CD8-positive, alpha-beta memory T cell (primary cell): ENCODE measurements at regions of chr7 and their contacts with region 1.

Region 1: GRCh38 chr7:5494683-5495561 is 71.3 kb upstream of the TNRC18 start:
- DNase-seq: peak; percentile 67 to 83 (median 73)
- H3K4me3 ChIP-seq: peak overlapping the region; percentile 25
- H3K4me3 Mint-ChIP-seq: peak overlapping the region in 6 of 7 donors; percentile 3 to 73 (median 58)
- H3K27ac ChIP-seq: no peak overlapping the region
- H3K27ac Mint-ChIP-seq: peak overlapping the region in 5 of 8 donors; percentile 23 to 51 (median 24)
- H3K4me1 ChIP-seq: peaks cover 19% of the 10 kb centered on the region
- H3K4me1 Mint-ChIP-seq: peaks cover 8 to 24% (median 23%) of the 10 kb centered on the region in 3 donors
- H3K27me3 ChIP-seq: no peaks in the 10 kb centered on the region
- H3K27me3 Mint-ChIP-seq: no peaks in the 10 kb centered on the region

Region 2: GRCh38 chr7:5387711-5388245 is 107.1 kb before region 1 on chr7:
- CTCF ChIA-PET with region 1: no interaction called
- POLR2A ChIA-PET with region 1: no interaction called
- DNase-seq: no peak
- H3K4me3 ChIP-seq: no peak overlapping the region
- H3K4me3 Mint-ChIP-seq: no peak overlapping the region
- H3K27ac ChIP-seq: no peak overlapping the region
- H3K27ac Mint-ChIP-seq: no peak overlapping the region
- H3K4me1 ChIP-seq: peaks cover 9% of the 10 kb centered on the region
- H3K4me1 Mint-ChIP-seq: peaks cover 17 to 43% (median 26%) of the 10 kb centered on the region in 3 donors
- H3K27me3 ChIP-seq: no peaks in the 10 kb centered on the region
- H3K27me3 Mint-ChIP-seq: no peaks in the 10 kb centered on the region

Region 3: GRCh38 chr7:5510426-5511045 is 15.6 kb after region 1 on chr7:
- CTCF ChIA-PET with region 1: interaction called, 18 read pairs
- POLR2A ChIA-PET with region 1: no interaction called
- DNase-seq: no peak
- H3K4me3 ChIP-seq: no peak overlapping the region
- H3K4me3 Mint-ChIP-seq: peak overlapping the region in 2 of 7 donors; percentile 6 to 20
- H3K27ac ChIP-seq: no peak overlapping the region
- H3K27ac Mint-ChIP-seq: no peak overlapping the region
- H3K4me1 ChIP-seq: peaks cover 17% of the 10 kb centered on the region
- H3K4me1 Mint-ChIP-seq: peaks cover 15 to 22% (median 16%) of the 10 kb centered on the region in 3 donors
- H3K27me3 ChIP-seq: no peaks in the 10 kb centered on the region
- H3K27me3 Mint-ChIP-seq: no peaks in the 10 kb centered on the region

Region 4: DNA sequence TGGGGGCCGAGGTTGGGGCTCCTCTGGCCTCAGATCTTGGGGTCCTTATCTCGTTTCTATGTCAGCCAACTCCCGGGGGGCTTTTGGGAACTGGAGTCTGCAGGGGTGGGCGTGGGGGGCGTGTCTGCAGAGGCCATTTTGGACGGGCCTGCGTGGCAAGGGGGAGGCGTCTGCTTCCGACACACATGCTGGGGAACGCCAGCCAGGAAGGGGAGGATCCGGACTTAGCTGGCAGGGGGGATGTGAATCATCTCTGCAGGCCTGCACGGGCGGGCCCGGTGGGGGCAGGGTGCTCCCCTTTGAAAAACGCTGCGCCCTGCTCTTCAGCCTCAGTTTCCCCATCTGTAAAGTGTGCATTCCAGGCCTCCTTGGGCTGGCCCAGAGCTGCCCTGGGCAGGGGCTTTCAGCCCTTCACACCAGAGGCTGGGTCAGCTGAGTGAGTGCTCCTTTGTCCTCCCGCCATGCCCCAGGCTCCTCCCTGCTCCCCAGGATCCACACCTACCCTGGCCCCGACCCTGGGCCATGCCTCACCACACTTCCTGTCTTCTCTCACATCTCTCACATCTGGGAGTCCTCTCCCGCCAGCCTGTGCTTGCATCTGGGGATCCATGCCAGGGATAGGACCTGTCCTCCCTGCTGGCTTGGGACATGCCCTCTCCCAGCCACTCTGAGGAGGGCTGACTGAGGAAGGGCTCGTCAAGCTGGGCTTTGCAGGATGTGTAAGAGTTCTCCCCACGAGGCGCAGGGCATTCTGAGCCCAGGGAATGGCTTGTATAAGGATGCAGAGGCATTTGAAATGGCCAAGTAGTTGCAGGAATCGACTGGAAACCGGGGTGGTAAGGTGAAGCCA is 101.3 kb after region 1 on chr7:
- CTCF ChIA-PET with region 1: no interaction called
- POLR2A ChIA-PET with region 1: no interaction called
- DNase-seq: peak; percentile 23 to 71 (median 27)
- H3K4me3 ChIP-seq: peak overlapping the region; percentile 32
- H3K4me3 Mint-ChIP-seq: peak overlapping the region; percentile 57 to 85 (median 75)
- H3K27ac ChIP-seq: peak overlapping the region; percentile 66
- H3K27ac Mint-ChIP-seq: peak overlapping the region in 5 of 8 donors; percentile 41 to 70 (median 52)
- H3K4me1 ChIP-seq: peaks cover 21% of the 10 kb centered on the region
- H3K4me1 Mint-ChIP-seq: peaks cover 14 to 27% (median 18%) of the 10 kb centered on the region in 3 donors
- H3K27me3 ChIP-seq: peaks cover 18% of the 10 kb centered on the region
- H3K27me3 Mint-ChIP-seq: peaks cover 14 to 27% of the 10 kb centered on the region in 2 donors

Region 5: GRCh38 chr7:5694912-5695726 is 200.2 kb after region 1 on chr7:
- CTCF ChIA-PET with region 1: interaction called, 67 read pairs
- POLR2A ChIA-PET with region 1: interaction called, 3 read pairs
- DNase-seq: peak; percentile 21 to 83 (median 69)
- H3K4me3 ChIP-seq: peak overlapping the region; percentile 35
- H3K4me3 Mint-ChIP-seq: peak overlapping the region; percentile 68 to 93 (median 86)
- H3K27ac ChIP-seq: no peak overlapping the region
- H3K27ac Mint-ChIP-seq: peak overlapping the region; percentile 65 to 95 (median 89)
- H3K4me1 ChIP-seq: peaks cover 92% of the 10 kb centered on the region
- H3K4me1 Mint-ChIP-seq: peaks cover 79 to 99% (median 98%) of the 10 kb centered on the region in 3 donors
- H3K27me3 ChIP-seq: no peaks in the 10 kb centered on the region
- H3K27me3 Mint-ChIP-seq: no peaks in the 10 kb centered on the region

Region 6: DNA sequence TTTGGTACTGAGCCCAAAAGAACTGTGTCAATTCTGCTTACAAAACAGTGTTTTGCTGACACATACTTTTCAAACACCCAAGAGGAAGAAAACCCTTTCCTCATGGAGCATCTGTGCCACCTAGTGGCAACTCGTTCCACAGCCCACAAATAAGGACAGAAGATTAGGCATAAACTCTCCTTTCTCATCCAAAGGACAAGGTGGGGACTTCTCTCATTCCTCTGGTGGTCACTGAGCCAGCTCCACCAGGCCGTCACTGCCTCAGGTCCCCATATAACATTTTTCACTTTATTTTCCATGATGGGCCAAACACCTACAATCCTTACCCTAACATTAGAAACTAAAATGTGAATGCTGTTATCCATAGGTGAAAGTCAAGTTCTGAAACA is 209.6 kb after region 1 on chr7:
- CTCF ChIA-PET with region 1: interaction called, 67 read pairs
- POLR2A ChIA-PET with region 1: interaction called, 8 read pairs
- DNase-seq: peak; percentile 44 to 80 (median 61)
- H3K4me3 ChIP-seq: no peak overlapping the region
- H3K4me3 Mint-ChIP-seq: no peak overlapping the region
- H3K27ac ChIP-seq: no peak overlapping the region
- H3K27ac Mint-ChIP-seq: peak overlapping the region in 3 of 8 donors; percentile 24 to 62 (median 37)
- H3K4me1 ChIP-seq: peaks cover 34% of the 10 kb centered on the region
- H3K4me1 Mint-ChIP-seq: peaks cover 31 to 36% (median 34%) of the 10 kb centered on the region in 3 donors
- H3K27me3 ChIP-seq: no peaks in the 10 kb centered on the region
- H3K27me3 Mint-ChIP-seq: no peaks in the 10 kb centered on the region